PC-3 (cell line): ENCODE measurements at regions of chr12 and their contacts with region 1.

Region 1: GRCh38 chr12:53379389-53380103 is 430 bp upstream of the SP1 start:
- DNase-seq: peak; percentile 100
- ATAC-seq: peak; percentile 77
- H3K4me3 ChIP-seq: peak overlapping the region; percentile 68
- H3K27ac ChIP-seq: peak overlapping the region; percentile 89
- H3K4me1 ChIP-seq: peaks cover 40% of the 10 kb centered on the region
- H3K27me3 ChIP-seq: no peaks in the 10 kb centered on the region
- CTCF ChIP-seq: no peak

Region 2: GRCh38 chr12:53338916-53339315 is 40.6 kb before region 1 on chr12:
- CTCF ChIA-PET with region 1: no interaction called
- POLR2A ChIA-PET with region 1: no interaction called
- intact Hi-C with region 1: no loop called
- DNase-seq: no peak
- ATAC-seq: no peak
- H3K4me3 ChIP-seq: no peak overlapping the region
- H3K27ac ChIP-seq: no peak overlapping the region
- H3K4me1 ChIP-seq: no peaks in the 10 kb centered on the region
- H3K27me3 ChIP-seq: no peaks in the 10 kb centered on the region
- CTCF ChIP-seq: no peak

Region 3: GRCh38 chr12:53352331-53353256 is 27.0 kb before region 1 on chr12:
- CTCF ChIA-PET with region 1: interaction called, 16 read pairs
- POLR2A ChIA-PET with region 1: interaction called, 3 read pairs
- intact Hi-C with region 1: loop called (anchors 1 kb)
- DNase-seq: peak; percentile 93
- ATAC-seq: peak; percentile 99
- H3K4me3 ChIP-seq: no peak overlapping the region
- H3K27ac ChIP-seq: no peak overlapping the region
- H3K4me1 ChIP-seq: peaks cover 6% of the 10 kb centered on the region
- H3K27me3 ChIP-seq: no peaks in the 10 kb centered on the region
- CTCF ChIP-seq: peak; percentile 92

Region 4: DNA sequence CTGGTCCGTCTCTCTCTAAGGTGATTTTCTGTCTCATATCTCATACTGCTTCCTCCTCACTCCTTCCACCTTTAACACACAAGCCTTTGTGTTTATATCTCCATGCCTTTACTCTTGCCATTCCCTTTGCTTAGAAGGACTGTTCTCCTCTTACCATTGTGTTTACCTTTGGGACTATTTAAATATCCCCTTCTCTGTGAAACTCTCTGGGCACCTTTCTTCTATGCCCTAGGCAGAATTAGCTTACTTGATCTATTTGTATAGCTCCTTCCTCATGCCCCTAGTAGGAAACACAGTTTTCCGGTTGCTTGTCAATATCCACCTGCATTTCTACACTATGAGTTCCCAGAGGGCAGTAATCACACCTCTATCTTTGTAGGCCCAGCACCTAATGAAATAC is 40.2 kb after region 1 on chr12:
- CTCF ChIA-PET with region 1: interaction called, 14 read pairs
- POLR2A ChIA-PET with region 1: interaction called, 8 read pairs
- intact Hi-C with region 1: loop called (anchors 2 kb)
- DNase-seq: peak; percentile 14
- ATAC-seq: no peak; the same call in 1 of the 2 replicates
- H3K4me3 ChIP-seq: no peak overlapping the region
- H3K27ac ChIP-seq: no peak overlapping the region
- H3K4me1 ChIP-seq: peaks cover 14% of the 10 kb centered on the region
- H3K27me3 ChIP-seq: no peaks in the 10 kb centered on the region
- CTCF ChIP-seq: no peak